ENCODE measurements at regions of chr9 and their contacts with region 1.

Region 1: DNA sequence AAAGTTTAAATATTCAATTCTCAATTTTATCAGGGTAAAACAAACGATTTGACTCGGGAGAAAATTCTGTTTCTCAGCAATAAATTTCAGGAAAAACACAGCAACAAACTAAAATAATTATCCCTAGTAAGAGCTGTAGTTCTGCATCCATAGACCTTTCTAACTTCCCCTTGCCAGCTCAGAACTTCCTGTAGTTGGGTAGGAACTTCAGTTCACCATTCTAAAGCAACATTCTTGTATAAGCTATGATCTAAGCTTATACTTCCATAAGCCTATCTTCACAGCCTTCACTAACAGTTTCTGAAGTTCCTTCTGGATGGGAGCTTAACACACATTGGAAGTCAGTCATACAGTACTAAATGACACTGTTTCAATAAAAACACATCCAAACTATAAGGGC is 96.6 kb downstream of the UBAP2 start:
- DNase-seq: no peak
- ATAC-seq: no peak
- H3K4me3 ChIP-seq: no peak overlapping the region
- H3K27ac ChIP-seq: no peak overlapping the region
- H3K4me1 ChIP-seq: peaks cover 11% of the 10 kb centered on the region
- H3K27me3 ChIP-seq: no peaks in the 10 kb centered on the region
- CTCF ChIP-seq: no peak
- POLR2A ChIP-seq: no peak
- RAD21 ChIP-seq: no peak

Region 2: DNA sequence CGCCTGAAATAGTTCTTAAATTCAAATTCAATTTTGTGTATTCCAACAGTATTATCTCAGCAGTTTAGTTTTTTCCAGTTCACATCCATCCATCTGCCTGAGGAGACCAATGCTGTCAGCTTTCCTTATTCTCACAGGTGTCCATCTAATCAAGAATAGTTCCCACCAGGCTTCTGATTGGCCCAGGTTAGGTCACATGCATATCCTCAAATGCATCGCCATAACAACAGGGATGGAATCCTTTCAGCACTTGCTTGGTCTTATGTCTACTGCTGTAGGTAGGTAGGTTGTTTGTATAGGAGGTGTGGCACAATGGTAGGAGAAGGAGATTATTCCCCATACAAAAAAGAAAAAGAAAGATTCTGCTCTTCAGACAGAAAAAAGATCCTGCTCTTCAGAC is 43.9 kb before region 1 on chr9:
- CTCF ChIA-PET with region 1: no interaction called
- POLR2A ChIA-PET with region 1: no interaction called
- dilution Hi-C with region 1: no loop called
- in situ Hi-C with region 1: no loop called
- intact Hi-C with region 1: no loop called
- DNase-seq: no peak
- ATAC-seq: no peak
- H3K4me3 ChIP-seq: no peak overlapping the region
- H3K27ac ChIP-seq: no peak overlapping the region
- H3K4me1 ChIP-seq: no peaks in the 10 kb centered on the region
- H3K27me3 ChIP-seq: no peaks in the 10 kb centered on the region
- CTCF ChIP-seq: no peak
- POLR2A ChIP-seq: no peak
- RAD21 ChIP-seq: no peak

Region 3: GRCh38 chr9:33992632-33993031 is 40.6 kb after region 1 on chr9:
- CTCF ChIA-PET with region 1: no interaction called
- POLR2A ChIA-PET with region 1: no interaction called
- dilution Hi-C with region 1: no loop called
- in situ Hi-C with region 1: no loop called
- intact Hi-C with region 1: loop called (anchors 5 kb)
- DNase-seq: peak; percentile 19
- ATAC-seq: peak; percentile 56
- H3K4me3 ChIP-seq: no peak overlapping the region
- H3K27ac ChIP-seq: peak overlapping the region; percentile 32; the same call in 1 of the 2 replicates
- H3K4me1 ChIP-seq: peaks cover 3% of the 10 kb centered on the region
- H3K27me3 ChIP-seq: no peaks in the 10 kb centered on the region
- CTCF ChIP-seq: no peak
- POLR2A ChIP-seq: no peak
- RAD21 ChIP-seq: no peak

Region 4: GRCh38 chr9:34246453-34246852 is 294.4 kb after region 1 on chr9:
- CTCF ChIA-PET with region 1: no interaction called
- POLR2A ChIA-PET with region 1: no interaction called
- dilution Hi-C with region 1: no loop called
- in situ Hi-C with region 1: no loop called
- intact Hi-C with region 1: no loop called
- DNase-seq: no peak
- ATAC-seq: no peak
- H3K4me3 ChIP-seq: no peak overlapping the region
- H3K27ac ChIP-seq: no peak overlapping the region
- H3K4me1 ChIP-seq: peaks cover 3% of the 10 kb centered on the region; the same call in 1 of the 2 replicates
- H3K27me3 ChIP-seq: no peaks in the 10 kb centered on the region
- CTCF ChIP-seq: no peak
- POLR2A ChIP-seq: no peak
- RAD21 ChIP-seq: no peak

Region 5: GRCh38 chr9:34665381-34666250 is 713.5 kb after region 1 on chr9:
- CTCF ChIA-PET with region 1: no interaction called
- POLR2A ChIA-PET with region 1: no interaction called
- dilution Hi-C with region 1: no loop called
- in situ Hi-C with region 1: no loop called
- intact Hi-C with region 1: no loop called
- DNase-seq: peak; percentile 95
- ATAC-seq: peak; percentile 91
- H3K4me3 ChIP-seq: peak overlapping the region; percentile 79
- H3K27ac ChIP-seq: peak overlapping the region; percentile 88
- H3K4me1 ChIP-seq: no peaks in the 10 kb centered on the region
- H3K27me3 ChIP-seq: no peaks in the 10 kb centered on the region
- CTCF ChIP-seq: no peak
- POLR2A ChIP-seq: peak; percentile 94
- RAD21 ChIP-seq: no peak

Measured in IMR-90 (cell line).